ENCODE measurements at regions of chr6 and their contacts with region 1.

Region 1: GRCh38 chr6:53474010-53474409 is 70.9 kb downstream of the GCLC start:
- DNase-seq: no peak
- H3K4me3 Mint-ChIP-seq: no peak overlapping the region
- H3K27ac Mint-ChIP-seq: no peak overlapping the region
- H3K4me1 Mint-ChIP-seq: no peaks in the 10 kb centered on the region
- H3K27me3 Mint-ChIP-seq: peaks cover 5% of the 10 kb centered on the region

Region 2: GRCh38 chr6:53484476-53485280 is 10.7 kb after region 1 on chr6:
- CTCF ChIA-PET with region 1: interaction called, 13 read pairs
- DNase-seq: peak; percentile 81
- H3K4me3 Mint-ChIP-seq: no peak overlapping the region
- H3K27ac Mint-ChIP-seq: no peak overlapping the region
- H3K4me1 Mint-ChIP-seq: peaks cover 14% of the 10 kb centered on the region
- H3K27me3 Mint-ChIP-seq: peaks cover 33% of the 10 kb centered on the region

Measured in activated naive CD4-positive, alpha-beta T cell treated with anti-CD3 and anti-CD28 coated beads, Interleukin-2, amount 10 ng/mL, durations not matched to agents 7 days and 5 days (primary cell).